Endothelial cell of umbilical vein (primary cell): ENCODE measurements at regions of chr13 and their contacts with region 1.

Region 1: GRCh38 chr13:39037880-39038568 is at the starts of genes NHLRC3 and PROSER1:
- DNase-seq: peak; percentile 89
- H3K4me3 ChIP-seq: peak within 1 kb of the TSS; percentile 75 to 98 (median 94)
- H3K27ac ChIP-seq: peak within 1 kb of the TSS; percentile 86
- H3K4me1 ChIP-seq: peaks cover 24% of the 10 kb centered on the region
- H3K27me3 ChIP-seq: no peaks in the 10 kb centered on the region
- CTCF ChIP-seq: no peak
- POLR2A ChIP-seq: peak; percentile 45
- total RNA-seq, gene NHLRC3: 10.2 and 11.9 TPM in 2 replicates
- total RNA-seq, gene PROSER1: 40.4 and 44.1 TPM in 2 replicates

Region 2: GRCh38 chr13:38349390-38350113 is 688.5 kb before region 1 on chr13 and contains the start of gene UFM1:
- CTCF ChIA-PET with region 1: no interaction called
- POLR2A ChIA-PET with region 1: no interaction called
- dilution Hi-C with region 1: no loop called
- intact Hi-C with region 1: loop called (anchors 10 kb)
- DNase-seq: peak; percentile 96
- H3K4me3 ChIP-seq: peak within 1 kb of the TSS; percentile 61 to 95 (median 89)
- H3K27ac ChIP-seq: peak within 1 kb of the TSS; percentile 97
- H3K4me1 ChIP-seq: peaks cover 18% of the 10 kb centered on the region
- H3K27me3 ChIP-seq: no peaks in the 10 kb centered on the region
- CTCF ChIP-seq: no peak
- POLR2A ChIP-seq: peak; percentile 83
- total RNA-seq, gene UFM1: 41.0 and 51.5 TPM in 2 replicates

Region 3: GRCh38 chr13:39023790-39024189 is 14.2 kb before region 1 on chr13:
- CTCF ChIA-PET with region 1: no interaction called
- POLR2A ChIA-PET with region 1: no interaction called
- dilution Hi-C with region 1: no loop called
- intact Hi-C with region 1: no loop called
- DNase-seq: no peak
- H3K4me3 ChIP-seq: no peak overlapping the region
- H3K27ac ChIP-seq: no peak overlapping the region
- H3K4me1 ChIP-seq: no peaks in the 10 kb centered on the region
- H3K27me3 ChIP-seq: no peaks in the 10 kb centered on the region
- CTCF ChIP-seq: no peak
- POLR2A ChIP-seq: no peak

Region 4: GRCh38 chr13:39765801-39766463 is 727.9 kb after region 1 on chr13:
- CTCF ChIA-PET with region 1: no interaction called
- POLR2A ChIA-PET with region 1: no interaction called
- dilution Hi-C with region 1: no loop called
- intact Hi-C with region 1: no loop called
- DNase-seq: peak; percentile 61
- H3K4me3 ChIP-seq: no peak overlapping the region
- H3K27ac ChIP-seq: no peak overlapping the region
- H3K4me1 ChIP-seq: no peaks in the 10 kb centered on the region
- H3K27me3 ChIP-seq: no peaks in the 10 kb centered on the region
- CTCF ChIP-seq: peak; percentile 32 to 45
- POLR2A ChIP-seq: no peak